Dendritic cell treated with granulocyte-macrophage colony-stimulating factor and Interleukin-4, amounts not matched to agents 40 ng/mL and 50 ng/mL, for 4 days (primary cell): ENCODE measurements at regions of chr2 and their contacts with region 1.

Region 1: DNA sequence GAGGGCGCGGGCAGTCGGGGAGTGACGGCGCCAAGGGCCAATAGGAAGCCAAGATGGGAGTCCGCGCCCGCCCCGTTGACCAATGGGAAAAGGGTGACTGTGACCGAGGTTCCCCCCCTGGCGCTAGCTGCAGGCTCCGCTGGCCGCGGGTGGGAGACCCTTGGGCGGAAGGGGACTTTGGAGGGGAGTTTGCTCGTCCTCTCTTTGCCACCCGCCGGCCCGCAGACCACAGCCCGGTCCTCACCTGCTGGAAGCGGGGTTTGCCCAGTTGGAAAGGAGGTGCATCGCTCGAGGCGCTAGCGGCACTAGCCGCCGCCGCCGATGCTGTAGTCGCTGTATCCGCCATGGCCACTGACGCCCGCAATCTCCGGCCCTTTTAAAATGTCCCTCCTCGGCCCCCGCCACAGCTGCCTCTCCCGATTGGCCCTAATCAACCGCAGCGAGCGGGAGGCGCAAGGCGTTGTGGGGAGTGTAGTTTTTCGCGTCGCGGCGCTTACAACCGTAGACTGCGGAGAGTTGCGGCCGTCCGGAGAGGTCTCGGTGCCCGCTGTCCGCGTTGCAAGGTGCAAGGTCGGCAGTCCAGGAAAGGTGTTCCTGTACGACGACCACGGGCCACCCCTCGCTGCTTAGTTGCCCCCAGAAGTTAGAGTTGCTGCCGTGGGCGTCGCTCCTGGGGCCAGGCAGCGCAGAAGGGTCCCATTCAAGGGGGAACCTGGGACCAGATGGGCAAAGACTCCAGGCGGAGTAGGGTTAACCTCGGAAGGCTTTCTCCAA is at the start of gene SFXN5:
- H3K4me3 Mint-ChIP-seq: peak within 1 kb of the TSS; percentile 91
- H3K27ac Mint-ChIP-seq: peak within 1 kb of the TSS; percentile 96
- H3K4me1 Mint-ChIP-seq: peaks cover 43% of the 10 kb centered on the region
- H3K27me3 Mint-ChIP-seq: peaks cover 2% of the 10 kb centered on the region

Region 2: DNA sequence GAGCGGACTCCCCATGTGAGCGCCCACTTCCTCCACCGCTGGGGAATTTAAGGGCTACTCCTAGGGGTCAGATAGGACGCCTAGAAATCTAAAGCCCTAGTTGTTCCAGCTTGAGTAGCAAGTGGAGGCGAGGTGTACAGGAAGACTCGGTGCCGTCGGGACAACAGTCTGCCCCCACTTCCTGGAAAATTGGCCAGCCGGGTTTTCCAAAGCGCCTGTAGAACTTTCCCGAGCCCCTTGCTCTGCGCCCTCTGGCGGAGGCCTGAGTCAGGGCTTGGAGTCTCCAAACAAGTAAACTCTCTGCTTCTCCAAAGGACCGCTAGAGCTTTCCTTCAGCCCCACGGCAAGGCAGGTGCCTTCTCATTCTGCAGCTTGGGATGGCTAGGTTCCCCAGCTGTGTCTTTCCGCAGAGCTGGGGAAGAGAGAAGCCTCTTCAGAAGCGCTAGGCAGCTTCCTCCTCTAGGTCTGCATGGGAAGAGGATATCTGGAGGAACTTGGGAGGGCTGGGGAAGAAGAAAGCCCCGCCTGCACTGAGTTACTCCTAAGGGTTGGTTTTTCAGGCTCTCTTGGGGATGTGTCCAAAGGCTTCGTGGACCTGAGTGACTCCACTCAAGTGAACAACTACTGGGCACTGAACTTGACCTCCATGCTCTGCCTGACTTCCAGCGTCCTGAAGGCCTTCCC is 183.7 kb before region 1 on chr2:
- intact Hi-C with region 1: loop called (anchors 2 kb)
- H3K4me3 Mint-ChIP-seq: peak overlapping the region; percentile 73
- H3K27ac Mint-ChIP-seq: peak overlapping the region; percentile 22
- H3K4me1 Mint-ChIP-seq: peaks cover 55% of the 10 kb centered on the region
- H3K27me3 Mint-ChIP-seq: peaks cover 52% of the 10 kb centered on the region

Region 3: GRCh38 chr2:72993147-72993932 is 78.2 kb before region 1 on chr2:
- intact Hi-C with region 1: loop called (anchors 5 kb)
- H3K4me3 Mint-ChIP-seq: no peak overlapping the region
- H3K27ac Mint-ChIP-seq: no peak overlapping the region
- H3K4me1 Mint-ChIP-seq: no peaks in the 10 kb centered on the region
- H3K27me3 Mint-ChIP-seq: no peaks in the 10 kb centered on the region

Region 4: GRCh38 chr2:73134471-73134870 is 62.9 kb after region 1 on chr2:
- intact Hi-C with region 1: no loop called
- H3K4me3 Mint-ChIP-seq: no peak overlapping the region
- H3K27ac Mint-ChIP-seq: no peak overlapping the region
- H3K4me1 Mint-ChIP-seq: peaks cover 12% of the 10 kb centered on the region
- H3K27me3 Mint-ChIP-seq: peaks cover 20% of the 10 kb centered on the region

Region 5: DNA sequence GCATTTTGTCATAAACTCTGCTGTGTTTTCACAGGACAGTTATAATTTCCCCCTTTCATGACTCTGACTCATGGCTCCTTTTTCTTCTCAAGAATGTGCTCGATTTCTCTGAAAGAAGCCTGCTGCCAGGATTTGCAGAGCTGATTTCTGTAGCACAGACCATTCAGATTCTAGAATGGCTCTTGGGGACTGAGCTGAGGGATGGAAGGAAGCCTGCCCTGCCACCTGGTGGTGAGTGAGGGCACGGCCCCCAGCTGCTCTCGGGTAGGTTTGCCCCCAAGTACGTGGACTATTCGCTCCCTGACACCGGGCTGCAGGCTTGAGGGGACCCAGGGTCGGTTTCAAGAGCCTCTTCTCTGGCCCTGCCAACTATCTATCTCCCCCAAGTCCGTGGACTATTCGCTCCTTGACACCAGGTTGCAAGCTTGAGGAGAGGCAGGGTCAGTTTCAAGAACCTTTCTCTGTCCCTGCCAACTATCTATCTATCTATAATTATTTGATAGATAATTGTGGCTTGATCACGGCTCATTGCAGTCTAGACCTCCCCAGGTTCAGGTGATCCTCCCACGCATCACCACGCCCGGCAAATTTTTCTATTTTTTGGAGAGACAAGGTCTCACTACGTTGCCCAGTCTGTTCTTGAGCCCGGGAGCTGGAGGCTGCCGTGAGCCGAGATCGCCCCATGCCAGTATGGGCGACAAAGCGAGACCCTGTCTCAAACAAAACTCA is 141.1 kb after region 1 on chr2:
- intact Hi-C with region 1: loop called (anchors 5 kb)
- H3K4me3 Mint-ChIP-seq: no peak overlapping the region
- H3K27ac Mint-ChIP-seq: no peak overlapping the region
- H3K4me1 Mint-ChIP-seq: peaks cover 26% of the 10 kb centered on the region
- H3K27me3 Mint-ChIP-seq: peaks cover 8% of the 10 kb centered on the region

Region 6: GRCh38 chr2:73233154-73233931 is 161.8 kb after region 1 on chr2 and contains the start of gene PRADC1:
- intact Hi-C with region 1: loop called (anchors 1 kb)
- H3K4me3 Mint-ChIP-seq: peak within 1 kb of the TSS; percentile 90
- H3K27ac Mint-ChIP-seq: peak within 1 kb of the TSS; percentile 89
- H3K4me1 Mint-ChIP-seq: peaks cover 35% of the 10 kb centered on the region
- H3K27me3 Mint-ChIP-seq: no peaks in the 10 kb centered on the region

Region 7: DNA sequence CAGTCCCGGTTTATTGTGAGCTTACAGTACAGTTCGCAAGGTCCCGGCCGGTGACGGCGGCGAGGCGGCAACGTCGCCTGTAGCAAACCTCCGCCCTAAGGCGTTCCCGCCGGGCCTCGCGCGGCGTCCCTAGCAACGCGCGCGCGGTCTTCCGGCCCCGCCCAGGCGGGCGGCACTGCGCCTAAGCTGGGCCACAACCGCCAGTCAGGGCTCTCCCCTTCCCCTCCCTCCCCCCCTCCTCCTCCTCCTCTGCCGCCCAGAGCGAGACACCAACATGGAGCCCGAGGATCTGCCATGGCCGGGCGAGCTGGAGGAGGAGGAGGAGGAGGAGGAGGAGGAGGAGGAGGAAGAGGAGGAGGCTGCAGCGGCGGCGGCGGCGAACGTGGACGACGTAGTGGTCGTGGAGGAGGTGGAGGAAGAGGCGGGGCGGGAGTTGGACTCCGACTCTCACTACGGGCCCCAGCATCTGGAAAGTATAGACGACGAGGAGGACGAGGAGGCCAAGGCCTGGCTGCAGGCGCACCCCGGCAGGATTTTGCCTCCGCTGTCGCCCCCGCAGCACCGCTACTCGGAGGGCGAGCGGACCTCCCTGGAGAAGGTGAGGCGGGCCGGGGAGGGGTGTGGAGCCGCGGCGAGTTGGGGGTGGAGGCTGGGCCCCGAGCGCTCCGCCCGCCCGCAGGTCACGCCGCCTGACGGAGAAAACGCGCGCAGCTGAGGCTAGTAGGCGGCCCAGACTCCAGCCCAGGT is 314.2 kb after region 1 on chr2 and contains the start of gene ALMS1:
- intact Hi-C with region 1: loop called (anchors 5 kb)
- H3K4me3 Mint-ChIP-seq: peak within 1 kb of the TSS; percentile 92
- H3K27ac Mint-ChIP-seq: peak within 1 kb of the TSS; percentile 94
- H3K4me1 Mint-ChIP-seq: peaks cover 33% of the 10 kb centered on the region
- H3K27me3 Mint-ChIP-seq: peaks cover 18% of the 10 kb centered on the region

Region 8: GRCh38 chr2:73970850-73971471 is 899.4 kb after region 1 on chr2:
- intact Hi-C with region 1: no loop called
- H3K4me3 Mint-ChIP-seq: peak overlapping the region; percentile 51
- H3K27ac Mint-ChIP-seq: peak overlapping the region; percentile 71
- H3K4me1 Mint-ChIP-seq: peaks cover 65% of the 10 kb centered on the region
- H3K27me3 Mint-ChIP-seq: no peaks in the 10 kb centered on the region